Common myeloid progenitor, CD34-positive (primary cell): ENCODE measurements at regions of chr5 and their contacts with region 1.

Region 1: DNA sequence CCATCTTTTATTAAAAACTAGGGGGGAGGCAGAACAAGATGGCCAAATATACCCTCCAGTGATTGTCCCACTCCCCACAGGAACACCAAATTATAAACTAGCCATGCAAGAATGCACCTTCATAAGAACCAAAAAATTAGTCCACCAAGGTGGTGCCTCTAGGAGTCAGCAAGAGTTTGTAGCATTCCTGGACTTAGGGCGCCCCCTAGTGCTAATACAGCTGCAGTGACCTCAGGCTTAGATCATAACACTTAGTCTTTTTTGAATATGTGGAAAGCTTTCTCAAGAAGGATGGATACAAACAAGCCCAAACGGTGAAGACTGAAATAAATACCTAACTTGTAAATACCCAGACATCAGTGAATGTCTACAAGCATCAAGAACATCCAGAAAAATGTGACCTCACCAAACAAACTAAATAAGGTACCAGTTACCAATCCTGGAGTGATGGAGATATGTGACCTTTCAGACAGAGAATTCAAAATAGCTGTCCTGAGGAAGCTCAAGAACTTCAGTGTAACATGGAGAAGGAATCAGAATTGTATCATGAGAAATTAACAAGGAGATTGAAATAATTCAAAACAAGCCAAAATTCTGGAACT is 19.3 kb downstream of the PPIP5K2 start:
- DNase-seq: peak; percentile 80 to 90 (median 85)
- H3K4me3 ChIP-seq: no peak overlapping the region
- H3K27ac ChIP-seq: no peak overlapping the region
- H3K4me1 ChIP-seq: no peaks in the 10 kb centered on the region
- H3K27me3 ChIP-seq: no peaks in the 10 kb centered on the region

Region 2: GRCh38 chr5:102583276-102584124 is 555.9 kb before region 1 on chr5:
- CTCF ChIA-PET with region 1: interaction called, 19 read pairs
- POLR2A ChIA-PET with region 1: no interaction called
- DNase-seq: peak; percentile 31 to 57 (median 56)
- H3K4me3 ChIP-seq: peak overlapping the region in 1 of 7 experiments; percentile 24
- H3K27ac ChIP-seq: no peak overlapping the region
- H3K4me1 ChIP-seq: no peaks in the 10 kb centered on the region
- H3K27me3 ChIP-seq: no peaks in the 10 kb centered on the region

Region 3: DNA sequence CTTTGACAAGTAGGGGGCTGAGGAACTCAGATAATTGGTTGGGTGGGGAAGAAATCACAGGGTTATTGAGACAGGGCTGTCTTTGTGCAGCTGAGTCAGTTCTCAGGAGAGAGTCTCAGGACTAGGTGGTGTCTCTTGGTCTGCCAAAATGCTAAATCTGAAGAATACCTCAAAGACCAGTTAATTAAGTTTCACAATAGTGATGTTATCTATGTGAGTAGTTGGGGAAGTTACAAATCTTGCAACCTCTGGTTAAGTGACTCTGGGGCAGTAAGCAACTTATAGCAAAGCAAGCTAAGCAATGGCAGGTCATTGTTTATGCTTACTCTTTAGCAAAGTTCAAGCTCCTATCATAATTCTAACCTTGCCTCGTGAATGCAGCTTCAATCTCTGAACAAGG is 73.0 kb before region 1 on chr5:
- CTCF ChIA-PET with region 1: interaction called, 12 read pairs
- POLR2A ChIA-PET with region 1: no interaction called
- DNase-seq: peak in 2 of 3 donors; percentile 13 to 17
- H3K4me3 ChIP-seq: no peak overlapping the region
- H3K27ac ChIP-seq: no peak overlapping the region
- H3K4me1 ChIP-seq: no peaks in the 10 kb centered on the region
- H3K27me3 ChIP-seq: no peaks in the 10 kb centered on the region